Gastrocnemius medialis (tissue), 4 donors: ENCODE measurements at regions of chr16 and their contacts with region 1.

Region 1: DNA sequence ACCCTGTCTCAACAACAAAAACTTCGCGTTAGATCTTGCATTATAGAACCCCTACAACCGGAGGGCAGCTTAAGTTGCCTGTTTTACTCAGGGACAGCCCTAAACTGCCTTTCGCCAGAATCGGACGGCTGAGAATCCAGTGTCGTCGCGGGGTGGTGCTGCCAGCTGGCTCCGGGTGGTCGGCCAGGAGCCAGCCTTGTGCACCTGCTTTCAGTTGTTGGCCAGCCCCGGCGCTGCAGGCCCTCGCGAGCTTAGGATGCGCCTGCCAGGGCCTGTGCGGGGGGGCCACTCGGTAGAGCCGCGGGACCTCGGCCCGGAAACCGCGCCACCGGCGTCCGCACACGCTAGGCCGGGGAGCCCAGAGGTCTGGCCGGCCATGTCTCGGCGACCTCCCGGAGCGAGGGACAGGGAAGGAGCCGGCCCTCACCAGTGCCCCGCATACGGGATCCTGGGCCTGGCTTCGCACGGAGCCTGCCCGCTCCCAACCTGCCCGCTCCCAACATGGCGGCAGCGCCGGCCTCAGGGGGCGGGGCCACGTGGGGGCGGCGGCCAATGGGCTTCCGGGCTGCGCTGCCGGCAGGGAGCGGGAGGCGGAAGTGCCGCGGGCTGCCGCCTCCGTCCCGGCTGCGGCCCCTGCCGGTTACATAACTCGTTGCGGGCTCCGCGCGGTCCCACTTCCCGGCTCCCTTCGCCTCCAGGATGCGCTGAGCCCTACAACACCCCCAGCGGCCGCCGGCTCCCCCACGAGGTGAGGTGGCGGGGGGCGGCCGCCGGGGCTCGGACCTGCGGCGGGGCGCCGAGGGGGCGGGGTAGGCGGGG is 14.2 kb downstream of the NAA60 start:
- DNase-seq: peak; percentile 86 to 95
- ATAC-seq: peak; percentile 86 to 87
- H3K4me3 ChIP-seq: peak overlapping the region; percentile 73 to 93 (median 80)
- H3K27ac ChIP-seq: peak overlapping the region; percentile 94 to 99 (median 97)
- H3K4me1 ChIP-seq: peaks cover 60 to 67% of the 10 kb centered on the region in 2 donors
- H3K27me3 ChIP-seq: no peaks in the 10 kb centered on the region
- CTCF ChIP-seq: peak in 4 of 5 experiments; percentile 16 to 71 (median 50)
- POLR2A ChIP-seq: peak; percentile 48 to 66

Region 2: DNA sequence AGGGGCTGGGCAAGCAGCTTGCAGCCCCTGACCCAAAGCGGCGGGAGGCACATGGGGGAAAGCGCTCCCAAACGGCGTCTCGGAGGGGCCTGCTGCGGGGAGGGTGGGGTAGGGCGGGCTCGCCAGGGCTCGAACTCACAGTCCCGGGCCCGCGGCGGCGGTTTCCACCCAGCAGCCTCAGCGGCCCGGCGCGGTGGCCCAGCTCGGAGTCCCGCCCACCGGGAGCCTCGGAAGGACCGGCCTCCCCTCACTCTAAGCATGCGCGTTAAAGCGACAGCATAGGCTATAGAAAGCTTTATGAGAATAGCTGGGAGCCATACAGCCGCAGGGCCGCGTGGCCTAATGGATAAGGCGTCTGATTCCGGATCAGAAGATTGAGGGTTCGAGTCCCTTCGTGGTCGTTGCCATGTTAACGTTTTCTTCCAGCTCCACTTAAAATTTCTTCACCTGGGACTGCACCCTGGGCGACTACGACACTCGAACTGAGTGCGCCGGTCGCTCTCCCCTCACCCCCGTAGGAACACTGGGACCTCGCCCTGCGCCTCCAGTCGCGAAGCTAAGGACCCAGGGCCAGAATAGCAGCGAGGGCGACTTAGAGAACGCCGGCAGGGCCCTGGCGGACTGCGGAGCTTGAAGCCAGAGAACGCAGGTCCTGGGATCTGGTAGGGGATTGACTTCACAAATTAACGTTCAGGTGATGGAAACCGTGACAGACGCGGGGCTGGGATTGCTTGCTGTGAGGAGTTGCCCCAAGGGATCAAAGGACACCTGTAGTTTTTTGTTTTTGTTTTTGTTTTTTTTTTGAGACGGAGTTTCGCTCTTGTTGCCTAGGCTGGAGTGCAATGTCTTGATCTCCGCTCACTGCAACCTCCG is 307.1 kb before region 1 on chr16:
- in situ Hi-C with region 1: no loop called
- intact Hi-C with region 1: loop called (anchors 2 kb)
- DNase-seq: peak; percentile 77 to 88
- ATAC-seq: peak; percentile 83 to 86
- H3K4me3 ChIP-seq: peak overlapping the region; percentile 67 to 87 (median 67)
- H3K27ac ChIP-seq: peak overlapping the region; percentile 68 to 78 (median 72)
- H3K4me1 ChIP-seq: peaks cover 13% of the 10 kb centered on the region in 2 donors
- H3K27me3 ChIP-seq: peaks cover 9 to 22% (median 11%) of the 10 kb centered on the region in 3 donors
- CTCF ChIP-seq: no peak
- POLR2A ChIP-seq: no peak

Region 3: DNA sequence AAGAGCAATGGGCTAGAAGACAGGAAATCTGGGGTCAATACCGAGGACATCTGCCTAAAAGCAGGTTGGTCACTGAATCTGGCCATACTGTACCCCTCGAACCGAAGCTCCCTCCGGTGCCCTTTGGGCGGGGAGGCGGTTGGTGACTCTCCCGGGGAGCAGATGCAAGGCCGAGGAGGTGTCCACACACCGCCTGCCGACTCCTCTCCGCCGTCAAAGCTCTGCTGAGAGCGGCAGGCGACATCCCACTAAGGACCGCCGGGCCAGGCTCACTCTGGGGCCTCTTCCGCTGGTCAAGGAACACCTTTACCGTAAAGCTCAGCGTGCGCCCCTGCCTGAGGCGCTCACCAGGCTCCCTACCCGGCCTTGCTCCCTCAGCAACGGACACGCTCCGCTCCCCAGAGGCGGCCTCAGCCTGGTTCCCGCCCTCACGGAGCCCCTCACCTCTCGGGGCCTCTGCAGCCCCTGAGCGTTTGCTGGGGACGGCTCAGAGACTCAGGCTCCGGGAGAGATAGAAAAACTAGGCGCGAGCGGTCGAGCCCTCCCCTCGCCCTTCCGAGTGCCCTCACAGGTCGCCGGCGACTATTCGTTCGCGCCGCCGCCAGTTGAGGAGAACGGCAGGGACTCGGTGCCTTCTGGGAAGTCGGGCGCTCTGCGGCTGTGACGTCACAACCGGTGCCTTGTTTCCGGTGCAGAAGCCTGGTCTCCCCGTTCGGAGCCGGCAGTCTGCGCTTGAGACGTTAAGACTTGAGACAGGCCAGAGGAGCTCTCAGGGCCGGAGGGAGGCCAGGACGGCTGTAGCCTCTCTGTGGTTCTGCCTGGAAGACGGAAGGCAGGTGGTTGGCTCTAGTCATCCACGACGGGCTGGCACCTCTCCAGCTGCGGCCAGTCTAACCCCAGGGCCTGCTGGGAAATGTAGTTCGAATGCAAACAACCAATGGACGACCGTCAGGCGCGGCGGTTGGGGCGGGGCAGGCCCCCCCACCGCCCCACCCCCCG is 222.8 kb before region 1 on chr16 and contains the start of gene ZNF200:
- in situ Hi-C with region 1: no loop called
- intact Hi-C with region 1: loop called (anchors 1 kb)
- DNase-seq: peak; percentile 93 to 94
- ATAC-seq: peak; percentile 99 to 100
- H3K4me3 ChIP-seq: peak within 1 kb of the TSS; percentile 87 to 100 (median 99)
- H3K27ac ChIP-seq: peak within 1 kb of the TSS; percentile 96 to 100 (median 98)
- H3K4me1 ChIP-seq: peaks cover 12% of the 10 kb centered on the region in 2 donors
- H3K27me3 ChIP-seq: no peaks in the 10 kb centered on the region
- CTCF ChIP-seq: no peak
- POLR2A ChIP-seq: peak; percentile 60 to 72
- total RNA-seq, gene ZNF200: 0.49 to 3.2 (median 2.2) TPM

Region 4: DNA sequence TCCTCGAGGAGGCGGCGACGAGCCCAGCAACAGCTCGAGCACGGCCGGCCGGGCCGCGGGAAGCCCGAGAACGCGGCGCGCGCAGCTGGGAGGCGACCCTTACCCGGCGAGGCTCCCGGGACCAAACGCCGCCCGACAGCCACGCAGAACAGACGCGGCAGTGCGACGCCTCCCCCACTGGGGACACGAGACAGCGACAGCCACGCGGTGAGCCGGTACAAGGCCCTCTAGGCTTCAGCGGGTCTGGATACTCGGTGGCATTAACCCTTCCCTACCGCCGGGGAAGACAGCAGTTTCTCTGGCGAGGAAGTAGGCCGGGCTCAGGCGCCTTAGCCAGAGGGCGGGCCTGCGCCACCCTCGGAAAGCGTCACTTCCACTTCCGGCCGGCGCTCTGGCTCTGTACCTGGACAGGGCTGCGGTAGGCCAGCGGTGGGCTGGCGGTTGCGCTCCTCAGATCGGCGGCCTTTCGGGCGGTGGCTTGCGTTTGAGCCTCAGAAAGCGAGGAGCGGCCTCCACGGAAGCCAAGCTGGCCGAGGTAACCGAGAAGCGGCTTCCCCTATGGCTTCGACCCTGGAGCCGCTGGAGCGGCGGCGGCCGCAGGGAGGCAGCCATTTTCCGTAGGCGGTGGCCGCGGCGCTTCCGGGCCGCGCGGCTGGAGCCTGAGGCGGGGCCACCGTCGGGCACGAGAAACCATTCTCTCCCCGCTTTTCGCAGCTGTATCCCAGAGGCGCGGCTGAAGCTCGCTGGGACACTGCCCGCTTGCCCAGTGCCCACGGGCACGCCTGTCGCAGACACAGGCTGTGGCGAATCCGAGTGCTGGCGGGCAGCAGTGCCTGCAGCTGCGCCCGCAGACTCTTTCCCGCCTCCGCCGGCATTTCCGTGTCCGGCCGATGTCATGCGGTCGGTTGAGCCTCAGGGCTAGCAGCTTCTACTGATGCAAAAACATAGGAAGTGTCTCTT is 152.3 kb before region 1 on chr16 and contains the starts of genes TIGD7 and ZNF75A:
- in situ Hi-C with region 1: no loop called
- intact Hi-C with region 1: loop called (anchors 1 kb)
- DNase-seq: peak; percentile 78
- ATAC-seq: peak; percentile 97 to 98
- H3K4me3 ChIP-seq: peak within 1 kb of the TSS; percentile 75 to 83 (median 76)
- H3K27ac ChIP-seq: peak within 1 kb of the TSS; percentile 89 to 94 (median 92)
- H3K4me1 ChIP-seq: peaks cover 13 to 16% of the 10 kb centered on the region in 2 donors
- H3K27me3 ChIP-seq: no peaks in the 10 kb centered on the region
- CTCF ChIP-seq: peak in 4 of 5 experiments; percentile 20 to 35 (median 27)
- POLR2A ChIP-seq: peak; percentile 88 to 93
- total RNA-seq, gene TIGD7: 2.5 to 8.1 (median 4.4) TPM
- total RNA-seq, gene ZNF75A: 5.5 to 13.2 (median 12.5) TPM

Region 5: GRCh38 chr16:3443108-3444031 is 14.3 kb before region 1 on chr16 and contains the starts of genes NAA60 and ZNF597:
- in situ Hi-C with region 1: no loop called
- intact Hi-C with region 1: loop called (anchors 2 kb)
- DNase-seq: peak; percentile 81 to 83
- ATAC-seq: peak; percentile 100
- H3K4me3 ChIP-seq: peak within 1 kb of the TSS; percentile 64 to 80 (median 68)
- H3K27ac ChIP-seq: peak within 1 kb of the TSS; percentile 73 to 85 (median 84)
- H3K4me1 ChIP-seq: peaks cover 4 to 8% of the 10 kb centered on the region in 2 donors
- H3K27me3 ChIP-seq: no peaks in the 10 kb centered on the region
- CTCF ChIP-seq: no peak
- POLR2A ChIP-seq: peak; percentile 36 to 47
- total RNA-seq, gene NAA60: 14.2 to 16.7 (median 15.4) TPM
- total RNA-seq, gene ZNF597: 0.81 to 1.3 (median 0.96) TPM

Region 6: DNA sequence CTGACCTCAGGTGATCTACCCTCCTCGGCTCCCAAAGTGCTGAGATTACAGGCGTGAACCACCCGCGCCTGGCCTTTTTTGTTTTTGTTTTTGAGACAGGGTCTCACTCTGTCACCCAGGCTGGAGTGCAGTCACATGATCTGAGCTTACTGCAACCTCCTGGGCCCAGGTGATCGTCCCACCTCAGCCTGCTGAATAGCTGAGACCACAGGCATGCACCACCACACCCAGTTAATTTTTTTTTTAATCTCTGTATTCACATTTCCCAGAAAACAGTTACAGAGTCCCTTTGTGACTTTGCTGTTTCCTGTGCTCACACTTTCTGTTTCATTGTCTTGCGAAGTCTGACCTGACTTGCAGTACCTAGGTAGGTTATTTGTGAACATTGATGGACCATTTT is 45.9 kb after region 1 on chr16:
- in situ Hi-C with region 1: no loop called
- intact Hi-C with region 1: loop called (anchors 2 kb)
- DNase-seq: no peak
- ATAC-seq: no peak
- H3K4me3 ChIP-seq: no peak overlapping the region
- H3K27ac ChIP-seq: no peak overlapping the region
- H3K4me1 ChIP-seq: peaks cover 6 to 15% of the 10 kb centered on the region in 2 donors
- H3K27me3 ChIP-seq: no peaks in the 10 kb centered on the region
- CTCF ChIP-seq: no peak
- POLR2A ChIP-seq: no peak

Region 7: GRCh38 chr16:3596101-3596861 is 138.6 kb after region 1 on chr16:
- in situ Hi-C with region 1: no loop called
- intact Hi-C with region 1: no loop called
- DNase-seq: no peak
- ATAC-seq: no peak
- H3K4me3 ChIP-seq: no peak overlapping the region
- H3K27ac ChIP-seq: no peak overlapping the region
- H3K4me1 ChIP-seq: no peaks in the 10 kb centered on the region
- H3K27me3 ChIP-seq: no peaks in the 10 kb centered on the region
- CTCF ChIP-seq: no peak
- POLR2A ChIP-seq: no peak

Region 8: GRCh38 chr16:3611146-3611975 is 153.7 kb after region 1 on chr16 and contains the start of gene SLX4:
- in situ Hi-C with region 1: no loop called
- intact Hi-C with region 1: loop called (anchors 5 kb)
- DNase-seq: peak; percentile 72 to 86
- ATAC-seq: peak; percentile 91 to 96
- H3K4me3 ChIP-seq: peak within 1 kb of the TSS; percentile 86 to 100 (median 98)
- H3K27ac ChIP-seq: peak within 1 kb of the TSS; percentile 77 to 92 (median 88)
- H3K4me1 ChIP-seq: peaks cover 16 to 23% of the 10 kb centered on the region in 2 donors
- H3K27me3 ChIP-seq: no peaks in the 10 kb centered on the region
- CTCF ChIP-seq: no peak
- POLR2A ChIP-seq: peak; percentile 76 to 79
- total RNA-seq, gene SLX4: 1.8 to 3.6 (median 2.8) TPM